ENCODE measurements at regions of chr14 and their contacts with region 1.

Region 1: GRCh38 chr14:75088574-75089373 is 19.3 kb downstream of the ZC2HC1C start:
- DNase-seq: peak; percentile 66
- H3K4me3 ChIP-seq: no peak overlapping the region
- H3K27ac ChIP-seq: no peak overlapping the region
- H3K4me1 ChIP-seq: no peaks in the 10 kb centered on the region
- H3K27me3 ChIP-seq: no peaks in the 10 kb centered on the region
- CTCF ChIP-seq: peak; percentile 91
- EP300 ChIP-seq: no peak
- RAD21 ChIP-seq: peak; percentile 95

Region 2: GRCh38 chr14:74697543-74697942 is 391.2 kb before region 1 on chr14:
- CTCF ChIA-PET with region 1: no interaction called
- POLR2A ChIA-PET with region 1: no interaction called
- DNase-seq: no peak
- H3K4me3 ChIP-seq: no peak overlapping the region
- H3K27ac ChIP-seq: peak overlapping the region in 1 of 2 experiments; percentile 37; a peak in 2 of 4 replicates
- H3K4me1 ChIP-seq: peaks cover 0 to 14% of the 10 kb centered on the region in 2 experiments; a peak in 1 of 4 replicates
- H3K27me3 ChIP-seq: no peaks in the 10 kb centered on the region
- CTCF ChIP-seq: no peak
- EP300 ChIP-seq: no peak
- RAD21 ChIP-seq: no peak

Region 3: DNA sequence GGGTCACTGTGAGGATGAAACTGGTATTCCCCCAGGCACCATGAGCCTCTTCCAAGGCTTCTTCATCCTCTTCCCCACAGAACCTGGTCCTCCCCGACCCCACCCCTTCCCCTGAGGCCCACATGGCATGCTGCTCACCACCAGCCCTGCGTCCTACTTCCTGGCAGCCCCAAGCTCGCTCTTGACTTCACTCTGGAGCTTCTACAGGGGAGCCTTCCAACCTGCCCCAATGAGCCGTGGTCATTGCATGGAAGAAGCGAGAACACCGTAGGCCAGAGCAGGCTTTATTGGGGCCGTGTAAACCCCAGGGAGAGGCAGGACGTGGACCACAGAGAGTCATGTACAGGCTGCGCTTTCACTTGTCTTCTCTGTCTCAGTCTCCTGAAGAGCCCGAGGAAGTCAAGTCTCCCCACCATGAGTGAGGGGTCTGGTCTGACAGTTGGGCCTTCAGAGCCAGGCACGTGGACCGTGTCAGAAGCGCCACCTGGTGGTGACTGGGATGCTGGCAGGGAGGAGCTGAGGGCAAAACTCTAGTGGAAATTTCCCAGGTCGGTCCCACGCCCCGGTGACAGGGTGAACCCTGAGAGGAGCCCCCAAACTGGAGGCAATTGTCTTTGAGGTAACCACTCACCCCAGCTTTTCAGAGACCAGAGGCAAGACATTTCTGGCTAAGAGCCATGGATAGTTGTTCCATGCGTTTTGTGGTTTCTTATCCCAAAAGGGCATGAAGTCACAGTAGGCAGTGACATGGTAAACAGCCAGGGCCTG is 183.2 kb before region 1 on chr14:
- CTCF ChIA-PET with region 1: interaction called, 42 read pairs
- POLR2A ChIA-PET with region 1: no interaction called
- DNase-seq: peak; percentile 86
- H3K4me3 ChIP-seq: no peak overlapping the region; a peak in 1 of 4 replicates
- H3K27ac ChIP-seq: peak overlapping the region in 1 of 2 experiments; percentile 39; a peak in 2 of 4 replicates
- H3K4me1 ChIP-seq: no peaks in the 10 kb centered on the region; a peak in 1 of 4 replicates
- H3K27me3 ChIP-seq: no peaks in the 10 kb centered on the region
- CTCF ChIP-seq: peak; percentile 97
- EP300 ChIP-seq: no peak
- RAD21 ChIP-seq: peak; percentile 73

Region 4: DNA sequence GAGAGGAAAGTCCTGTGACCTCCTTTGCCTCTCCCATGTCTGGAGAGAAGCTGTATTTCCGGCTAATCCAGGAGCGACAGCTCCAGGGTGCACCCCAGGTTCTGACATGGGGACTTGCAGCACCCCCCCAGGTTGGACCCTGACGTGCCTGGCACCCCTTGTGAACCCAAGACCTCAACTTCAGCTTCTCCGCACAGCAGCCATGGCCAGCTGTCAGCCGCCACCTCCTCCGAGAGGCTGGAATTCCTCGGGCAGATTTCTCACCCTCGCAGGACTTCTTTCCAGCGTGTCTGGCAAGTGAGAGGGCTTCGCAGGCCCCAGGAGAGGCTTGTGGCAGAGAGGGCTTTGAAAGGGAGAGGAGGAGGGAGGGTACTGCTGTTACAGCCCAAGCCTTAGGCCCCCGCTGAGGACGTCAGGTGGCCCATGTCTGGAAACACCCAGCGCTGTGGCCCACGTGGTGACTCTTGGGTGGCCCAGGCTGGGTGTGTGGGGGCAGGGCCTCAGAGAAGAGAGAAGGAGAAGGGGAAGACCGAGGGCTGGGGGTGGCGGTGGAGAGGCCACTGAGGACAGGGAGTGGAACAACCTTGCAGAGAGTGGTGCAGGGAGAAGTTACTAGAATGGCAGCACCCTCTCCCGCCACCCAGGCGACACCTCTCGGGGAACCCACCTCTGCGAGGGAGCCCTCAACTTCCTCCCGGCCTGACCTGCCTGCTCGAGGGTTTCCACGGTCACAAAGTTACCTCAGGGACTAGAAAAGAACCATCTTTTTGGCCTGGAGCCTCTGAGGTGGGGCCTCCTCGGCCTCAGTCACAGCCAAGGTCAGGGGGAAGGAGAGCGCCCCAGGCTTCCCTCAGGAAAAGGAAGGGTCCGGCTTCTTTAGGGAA is 154.1 kb before region 1 on chr14:
- CTCF ChIA-PET with region 1: interaction called, 290 read pairs
- POLR2A ChIA-PET with region 1: no interaction called
- DNase-seq: no peak
- H3K4me3 ChIP-seq: no peak overlapping the region
- H3K27ac ChIP-seq: no peak overlapping the region
- H3K4me1 ChIP-seq: peaks cover 2 to 3% of the 10 kb centered on the region in 2 experiments; a peak in 3 of 4 replicates
- H3K27me3 ChIP-seq: no peaks in the 10 kb centered on the region
- CTCF ChIP-seq: no peak
- EP300 ChIP-seq: no peak
- RAD21 ChIP-seq: no peak

Region 5: GRCh38 chr14:74984236-74985025 is 104.3 kb before region 1 on chr14:
- CTCF ChIA-PET with region 1: interaction called, 10 read pairs
- POLR2A ChIA-PET with region 1: no interaction called
- DNase-seq: no peak
- H3K4me3 ChIP-seq: no peak overlapping the region
- H3K27ac ChIP-seq: no peak overlapping the region
- H3K4me1 ChIP-seq: peaks cover 28 to 29% of the 10 kb centered on the region in 2 experiments; a peak in 3 of 4 replicates
- H3K27me3 ChIP-seq: no peaks in the 10 kb centered on the region
- CTCF ChIP-seq: no peak
- EP300 ChIP-seq: no peak
- RAD21 ChIP-seq: no peak

Region 6: DNA sequence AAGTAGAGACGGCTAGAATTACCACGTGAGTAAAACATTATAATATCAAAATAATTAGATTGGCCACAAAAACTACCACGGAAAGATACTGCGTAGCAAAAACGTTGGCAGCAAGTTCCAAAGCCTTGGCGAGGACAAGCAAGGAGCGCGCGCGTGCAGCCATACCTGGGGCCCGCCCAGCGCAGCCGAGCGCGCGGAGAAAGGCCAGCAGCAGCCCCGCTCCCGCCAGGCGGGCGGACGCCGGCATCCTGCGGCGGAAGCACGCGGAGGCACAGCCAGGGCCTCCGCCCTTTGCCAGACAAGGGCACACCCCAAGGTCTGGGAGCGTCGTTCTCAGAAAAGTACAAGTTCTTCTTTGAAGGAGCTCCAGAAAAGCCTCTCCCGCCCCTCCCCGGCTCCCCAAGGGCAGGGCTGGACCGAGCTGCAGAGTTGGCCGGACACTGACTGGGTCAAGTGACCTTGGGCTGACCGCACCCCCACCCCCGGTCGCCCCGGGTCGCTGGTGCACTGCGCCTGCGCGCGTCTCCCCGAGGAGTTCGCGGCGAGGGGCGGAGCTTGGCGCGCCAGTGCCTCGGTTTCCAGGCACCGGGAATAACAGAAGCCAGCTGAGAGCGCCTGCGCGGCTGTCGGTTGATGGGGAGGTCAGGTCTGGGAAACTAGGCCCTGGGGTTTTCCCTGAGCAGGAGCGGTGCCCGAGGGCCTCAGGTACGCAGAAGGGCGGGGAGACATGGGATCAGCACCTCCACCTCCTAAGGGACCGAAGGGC is 19.5 kb before region 1 on chr14 and contains the start of gene ZC2HC1C:
- CTCF ChIA-PET with region 1: interaction called, 26 read pairs
- POLR2A ChIA-PET with region 1: no interaction called
- DNase-seq: peak; percentile 97
- H3K4me3 ChIP-seq: peak within 1 kb of the TSS; percentile 59 to 69
- H3K27ac ChIP-seq: peak within 1 kb of the TSS; percentile 84 to 98
- H3K4me1 ChIP-seq: peaks cover 0 to 11% of the 10 kb centered on the region in 2 experiments; a peak in 1 of 4 replicates
- H3K27me3 ChIP-seq: no peaks in the 10 kb centered on the region
- CTCF ChIP-seq: no peak
- EP300 ChIP-seq: peak in 1 of 2 experiments; percentile 25; a peak in 2 of 4 replicates
- RAD21 ChIP-seq: peak; percentile 9; the same call in 1 of the 2 replicates
- polyA plus RNA-seq, gene ZC2HC1C: 1.2 and 1.4 TPM in 2 replicates

Region 7: DNA sequence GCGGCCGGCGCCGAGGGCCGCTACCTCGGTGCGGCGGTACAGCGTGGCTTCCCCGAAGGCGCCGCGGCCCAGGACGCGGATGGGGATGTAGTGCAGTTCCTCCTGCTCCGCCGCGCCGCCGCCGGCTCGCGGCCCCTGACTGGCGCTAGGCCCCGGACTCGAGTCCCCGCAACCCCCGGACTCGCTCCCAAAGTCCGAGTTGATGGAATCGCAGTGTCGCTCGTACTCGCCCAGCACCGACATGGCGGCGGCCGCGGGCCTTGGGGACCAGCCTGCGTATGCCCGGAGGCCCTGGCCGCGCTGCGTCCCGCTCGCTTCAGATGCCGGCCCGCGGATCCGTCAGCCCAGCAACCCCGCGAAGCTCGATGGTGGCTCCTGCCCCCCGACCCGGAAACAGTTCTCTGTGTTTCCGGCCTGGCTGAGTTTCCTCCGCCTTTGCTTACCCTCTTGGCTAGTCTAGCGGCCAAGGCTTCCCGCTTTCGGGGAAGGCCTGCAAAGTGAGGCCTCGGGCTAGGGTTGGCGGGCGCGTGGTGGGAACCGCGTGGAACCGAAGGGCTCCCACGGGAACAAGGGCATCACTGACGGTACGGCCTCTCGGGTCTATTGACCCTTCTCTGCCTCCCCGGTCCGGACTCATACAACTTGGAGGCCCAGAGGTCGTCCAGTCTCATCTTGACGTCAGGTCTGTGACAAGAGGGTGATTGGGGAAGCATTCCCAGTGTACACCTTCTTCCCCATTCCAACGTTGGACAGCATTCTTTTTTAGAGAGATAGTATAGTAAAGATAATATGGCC is 38.1 kb after region 1 on chr14 and contains the start of gene NEK9:
- CTCF ChIA-PET with region 1: interaction called, 12 read pairs
- POLR2A ChIA-PET with region 1: no interaction called
- DNase-seq: peak; percentile 94
- H3K4me3 ChIP-seq: peak within 1 kb of the TSS; percentile 70 to 85
- H3K27ac ChIP-seq: peak within 1 kb of the TSS; percentile 77 to 92
- H3K4me1 ChIP-seq: peaks cover 3 to 17% of the 10 kb centered on the region in 2 experiments; a peak in 3 of 4 replicates
- H3K27me3 ChIP-seq: no peaks in the 10 kb centered on the region
- CTCF ChIP-seq: no peak
- EP300 ChIP-seq: 0 out of 4 replicates have a peak, but pooled peaks of 1 of the 2 experiments have one; percentile 15
- RAD21 ChIP-seq: no peak
- polyA plus RNA-seq, gene NEK9: 48.1 and 53.3 TPM in 2 replicates